ENCODE measurements at regions of chr4 and their contacts with region 1.

Region 1: DNA sequence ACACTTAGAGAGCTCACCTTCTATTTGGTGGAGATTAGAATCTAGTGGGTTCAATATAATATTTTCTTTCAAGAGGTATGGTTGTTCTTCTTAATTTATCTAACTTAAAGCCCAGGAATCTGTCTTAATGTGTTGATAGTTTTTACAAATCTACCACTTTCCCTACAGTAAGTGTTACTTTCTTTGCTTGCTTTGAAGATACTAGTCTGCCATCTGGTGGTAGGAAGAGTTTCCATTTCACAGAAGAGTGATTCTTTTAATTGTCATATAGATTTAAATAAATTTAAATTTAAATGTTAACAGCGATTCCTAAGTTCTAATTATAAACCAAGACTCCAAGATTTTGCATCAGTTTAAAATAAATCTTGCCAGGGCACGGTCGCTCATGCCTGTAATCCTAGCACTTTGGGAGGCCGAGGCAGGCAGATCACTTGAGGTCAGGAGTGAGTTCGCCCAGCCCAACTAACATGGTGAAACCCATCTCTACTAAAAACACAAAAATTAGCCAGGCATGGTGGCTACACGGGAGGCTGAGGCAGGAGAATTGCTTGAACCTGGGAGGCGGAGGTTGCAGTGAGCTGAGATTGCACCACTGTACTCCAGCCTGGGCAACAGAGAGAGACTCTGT is 43.5 kb downstream of the NUDT9 start:
- DNase-seq: peak; percentile 20
- H3K27ac ChIP-seq: no peak overlapping the region
- CTCF ChIP-seq: peak; percentile 66

Region 2: DNA sequence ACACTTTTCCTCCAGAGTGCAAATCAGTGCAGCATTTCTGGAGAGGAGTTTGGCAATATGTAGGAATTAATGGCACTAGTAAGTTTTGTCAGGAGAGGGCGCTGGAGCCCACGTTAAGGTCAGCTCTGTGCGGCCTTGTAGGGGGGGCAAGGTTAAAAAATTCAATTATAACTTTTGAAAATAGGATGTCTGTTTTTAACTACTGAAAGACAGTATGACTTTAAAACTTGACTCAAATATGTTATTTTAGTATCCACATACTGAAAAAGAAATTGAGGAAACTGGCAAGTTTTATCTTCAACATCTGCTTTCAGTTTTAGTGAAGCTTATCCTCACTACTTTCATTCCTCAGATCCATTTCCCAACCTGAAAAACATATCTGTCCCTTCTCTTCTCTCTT is 112.3 kb before region 1 on chr4:
- CTCF ChIA-PET with region 1: interaction called, 13 read pairs
- POLR2A ChIA-PET with region 1: no interaction called
- DNase-seq: peak; percentile 38
- H3K27ac ChIP-seq: no peak overlapping the region
- CTCF ChIP-seq: peak; percentile 65

Region 3: DNA sequence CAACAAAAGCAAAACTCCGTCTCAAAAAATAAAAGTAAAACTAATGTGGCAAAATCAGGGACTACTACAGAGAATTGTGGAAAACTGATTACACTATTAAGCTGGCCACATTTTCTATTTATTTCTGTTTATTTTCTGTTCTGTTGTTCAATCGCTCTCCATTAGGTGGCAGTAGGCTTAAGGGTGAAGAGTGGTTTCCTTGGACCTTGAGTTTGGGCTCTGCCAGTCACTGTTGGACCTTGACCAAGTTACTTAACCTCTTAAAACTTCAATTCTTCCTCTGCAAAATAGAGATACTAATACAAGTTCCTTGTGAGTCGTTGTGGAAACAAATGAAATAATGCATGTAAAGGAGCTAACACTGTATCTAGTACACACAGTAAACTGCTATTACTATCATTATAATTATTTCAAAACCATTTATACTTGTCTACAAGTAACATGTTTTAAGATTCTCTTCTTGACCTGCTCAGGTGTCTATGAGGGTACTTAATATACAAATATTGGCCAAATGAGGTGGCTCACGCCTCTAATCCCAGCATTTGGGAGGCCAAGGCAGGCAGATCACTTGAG is 90.0 kb before region 1 on chr4:
- CTCF ChIA-PET with region 1: interaction called, 13 read pairs
- POLR2A ChIA-PET with region 1: no interaction called
- DNase-seq: peak; percentile 27
- H3K27ac ChIP-seq: peak overlapping the region; percentile 20; the same call in 1 of the 2 replicates
- CTCF ChIP-seq: peak; percentile 71